MCF 10A (cell line): ENCODE measurements at regions of chr17 and their contacts with region 1.

Region 1: GRCh38 chr17:63478791-63479494 is 2.1 kb downstream of the ACE start:
- DNase-seq: peak; percentile 91
- H3K4me3 Mint-ChIP-seq: no peak overlapping the region
- H3K27ac Mint-ChIP-seq: no peak overlapping the region
- H3K4me1 Mint-ChIP-seq: no peaks in the 10 kb centered on the region
- H3K27me3 Mint-ChIP-seq: no peaks in the 10 kb centered on the region
- CTCF ChIP-seq: peak; percentile 88

Region 2: GRCh38 chr17:63434876-63435684 is 43.9 kb before region 1 on chr17:
- CTCF ChIA-PET with region 1: interaction called, 216 read pairs
- POLR2A ChIA-PET with region 1: interaction called, 8 read pairs
- intact Hi-C with region 1: loop called (anchors 2 kb)
- DNase-seq: peak; percentile 94
- H3K4me3 Mint-ChIP-seq: peak overlapping the region; percentile 13
- H3K27ac Mint-ChIP-seq: no peak overlapping the region
- H3K4me1 Mint-ChIP-seq: peaks cover 43% of the 10 kb centered on the region
- H3K27me3 Mint-ChIP-seq: no peaks in the 10 kb centered on the region
- CTCF ChIP-seq: peak; percentile 52

Region 3: GRCh38 chr17:63453031-63453461 is 25.9 kb before region 1 on chr17:
- CTCF ChIA-PET with region 1: interaction called, 62 read pairs
- POLR2A ChIA-PET with region 1: interaction called, 3 read pairs
- intact Hi-C with region 1: no loop called
- DNase-seq: no peak
- H3K4me3 Mint-ChIP-seq: no peak overlapping the region
- H3K27ac Mint-ChIP-seq: no peak overlapping the region
- H3K4me1 Mint-ChIP-seq: peaks cover 5% of the 10 kb centered on the region
- H3K27me3 Mint-ChIP-seq: no peaks in the 10 kb centered on the region
- CTCF ChIP-seq: no peak

Region 4: DNA sequence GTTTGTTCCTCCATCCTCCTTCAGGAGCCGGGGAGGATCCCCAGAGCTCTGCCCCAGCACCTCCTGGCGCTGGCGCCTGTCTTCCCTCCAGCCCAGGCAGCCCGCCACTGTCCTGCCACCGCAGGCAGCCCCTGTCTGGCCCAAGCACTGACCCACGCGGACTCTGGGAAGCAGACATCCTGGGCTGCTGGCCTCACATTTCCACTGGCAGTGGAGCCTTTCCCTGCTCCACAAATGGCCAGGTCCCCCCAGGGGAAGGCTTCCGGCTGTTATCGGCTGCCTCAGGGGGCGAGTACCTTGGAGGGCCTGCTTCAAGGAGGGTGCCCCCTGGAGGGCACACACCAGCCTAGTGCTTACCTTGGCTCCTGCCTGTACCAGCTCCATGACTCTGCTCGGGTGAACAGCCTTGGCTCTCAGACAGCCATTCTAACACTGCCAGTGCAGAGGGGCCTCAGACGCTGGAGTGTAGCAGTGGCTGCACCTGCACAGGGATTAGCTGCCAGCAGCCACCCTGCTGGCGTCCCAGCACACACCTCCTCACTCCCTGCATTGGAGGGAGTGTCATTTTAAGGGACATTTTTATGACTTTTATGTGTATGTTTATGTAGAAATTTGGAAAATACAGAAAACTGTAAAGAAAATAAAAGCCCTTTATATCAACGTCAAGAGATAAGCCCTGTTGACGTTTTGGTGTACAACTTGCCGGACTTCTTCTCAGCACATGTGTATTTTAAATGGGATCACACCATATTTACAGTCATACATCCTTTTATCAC is 19.0 kb after region 1 on chr17:
- CTCF ChIA-PET with region 1: interaction called, 27 read pairs
- POLR2A ChIA-PET with region 1: no interaction called
- intact Hi-C with region 1: no loop called
- DNase-seq: peak; percentile 18
- H3K4me3 Mint-ChIP-seq: no peak overlapping the region
- H3K27ac Mint-ChIP-seq: no peak overlapping the region
- H3K4me1 Mint-ChIP-seq: no peaks in the 10 kb centered on the region
- H3K27me3 Mint-ChIP-seq: peaks cover 29% of the 10 kb centered on the region
- CTCF ChIP-seq: no peak